ENCODE measurements at regions of chr4 and their contacts with region 1.

Region 1: DNA sequence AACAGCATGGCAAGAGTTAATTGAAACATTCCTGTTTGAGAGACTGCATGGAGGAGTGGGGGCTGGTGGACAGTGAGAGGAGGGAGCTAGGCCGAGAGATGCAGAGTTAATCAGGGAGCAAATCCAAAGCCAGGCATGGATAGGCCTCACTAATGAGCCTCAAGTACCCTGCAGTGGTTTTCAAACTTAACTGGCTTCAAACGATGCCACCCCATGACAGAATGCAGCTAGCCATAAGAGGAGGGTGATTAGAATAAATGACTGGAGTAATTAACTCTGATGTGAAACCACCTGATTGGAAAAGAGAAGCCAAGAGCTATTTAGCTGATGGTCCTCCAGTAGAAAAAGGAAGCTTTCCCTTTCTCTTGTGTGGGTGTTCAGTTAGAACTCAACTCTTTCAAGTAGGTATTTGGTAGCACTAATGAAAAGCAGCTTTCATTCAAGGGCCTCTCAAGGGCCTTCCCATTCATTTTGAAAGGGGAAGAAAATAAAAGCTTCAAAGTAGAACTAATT is 215.4 kb upstream of the MAB21L2 start:
- DNase-seq: peak; percentile 54
- ATAC-seq: peak; percentile 91
- H3K4me3 ChIP-seq: no peak overlapping the region
- H3K27ac ChIP-seq: no peak overlapping the region
- H3K4me1 ChIP-seq: peaks cover 3% of the 10 kb centered on the region; the same call in 1 of the 2 replicates
- H3K27me3 ChIP-seq: no peaks in the 10 kb centered on the region
- CTCF ChIP-seq: no peak
- EP300 ChIP-seq: no peak; a peak in 1 of 4 replicates
- POLR2A ChIP-seq: no peak
- RAD21 ChIP-seq: no peak

Region 2: GRCh38 chr4:149914119-149915115 is 452.1 kb before region 1 on chr4:
- CTCF ChIA-PET with region 1: no interaction called
- POLR2A ChIA-PET with region 1: no interaction called
- RAD21 ChIA-PET with region 1: no interaction called
- SMC1A ChIA-PET with region 1: no interaction called
- in situ Hi-C with region 1: no loop called
- intact Hi-C with region 1: no loop called
- DNase-seq: no peak
- ATAC-seq: peak; percentile 89
- H3K4me3 ChIP-seq: no peak overlapping the region
- H3K27ac ChIP-seq: no peak overlapping the region
- H3K4me1 ChIP-seq: no peaks in the 10 kb centered on the region
- H3K27me3 ChIP-seq: no peaks in the 10 kb centered on the region
- CTCF ChIP-seq: peak; percentile 53 to 75 (median 72)
- EP300 ChIP-seq: no peak
- POLR2A ChIP-seq: no peak
- RAD21 ChIP-seq: peak; percentile 33; the same call in 1 of the 2 replicates

Region 3: DNA sequence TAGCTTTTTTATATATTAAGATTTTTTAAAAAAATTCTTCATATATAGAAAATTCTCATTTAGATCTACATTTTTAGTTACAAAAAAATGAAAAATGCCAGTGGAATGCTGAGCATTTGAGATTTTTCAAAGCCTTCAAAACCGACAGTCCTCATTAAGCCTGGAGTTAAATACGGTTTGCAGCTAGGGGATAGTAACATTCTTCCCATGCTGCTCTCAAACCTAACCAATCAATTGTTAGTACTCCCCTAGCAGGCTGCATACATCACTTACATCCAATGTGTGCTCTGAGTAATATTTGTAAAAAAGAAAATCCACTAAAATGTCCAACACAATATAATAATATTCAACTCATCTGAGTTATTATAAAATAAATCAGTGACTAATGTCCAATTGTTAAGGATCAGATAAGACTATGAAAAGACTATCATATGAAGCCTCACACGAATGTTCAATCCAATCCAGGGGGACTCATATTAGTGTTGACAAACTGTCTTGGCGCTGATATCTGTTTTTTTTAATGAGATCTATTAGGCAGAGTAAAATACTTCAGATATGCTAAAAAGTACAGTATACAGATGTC is 12.2 kb before region 1 on chr4:
- CTCF ChIA-PET with region 1: interaction called, 4 read pairs
- POLR2A ChIA-PET with region 1: interaction called, 3 read pairs
- RAD21 ChIA-PET with region 1: interaction called, 9 read pairs
- SMC1A ChIA-PET with region 1: interaction called, 14 read pairs
- in situ Hi-C with region 1: no loop called
- intact Hi-C with region 1: no loop called
- DNase-seq: no peak
- ATAC-seq: no peak
- H3K4me3 ChIP-seq: no peak overlapping the region
- H3K27ac ChIP-seq: no peak overlapping the region
- H3K4me1 ChIP-seq: no peaks in the 10 kb centered on the region
- H3K27me3 ChIP-seq: no peaks in the 10 kb centered on the region
- CTCF ChIP-seq: no peak
- EP300 ChIP-seq: no peak
- POLR2A ChIP-seq: no peak
- RAD21 ChIP-seq: no peak

Region 4: GRCh38 chr4:150379454-150379853 is 12.9 kb after region 1 on chr4:
- CTCF ChIA-PET with region 1: interaction called, 11 read pairs
- POLR2A ChIA-PET with region 1: no interaction called
- RAD21 ChIA-PET with region 1: no interaction called
- SMC1A ChIA-PET with region 1: interaction called, 15 read pairs
- in situ Hi-C with region 1: no loop called
- intact Hi-C with region 1: no loop called
- DNase-seq: no peak
- ATAC-seq: no peak
- H3K4me3 ChIP-seq: no peak overlapping the region
- H3K27ac ChIP-seq: no peak overlapping the region
- H3K4me1 ChIP-seq: no peaks in the 10 kb centered on the region
- H3K27me3 ChIP-seq: no peaks in the 10 kb centered on the region
- CTCF ChIP-seq: no peak
- EP300 ChIP-seq: no peak
- POLR2A ChIP-seq: no peak
- RAD21 ChIP-seq: no peak